B cell (primary cell): ENCODE measurements at regions of chr1 and their contacts with region 1.

Region 1: GRCh38 chr1:87084244-87084836 is 169.9 kb downstream of the HS2ST1 start:
- DNase-seq: peak; percentile 65
- ATAC-seq: no peak
- H3K4me3 ChIP-seq: no peak overlapping the region
- H3K4me3 Mint-ChIP-seq: no peak overlapping the region
- H3K27ac ChIP-seq: no peak overlapping the region
- H3K27ac Mint-ChIP-seq: no peak overlapping the region
- H3K4me1 ChIP-seq: peaks cover 0 to 4% of the 10 kb centered on the region in 2 donors
- H3K4me1 Mint-ChIP-seq: peaks cover 14% of the 10 kb centered on the region
- H3K27me3 ChIP-seq: no peaks in the 10 kb centered on the region
- H3K27me3 Mint-ChIP-seq: no peaks in the 10 kb centered on the region
- CTCF ChIP-seq: peak; percentile 88

Region 2: GRCh38 chr1:86380257-86380861 is 704.0 kb before region 1 on chr1:
- CTCF ChIA-PET with region 1: interaction called, 6 read pairs
- POLR2A ChIA-PET with region 1: no interaction called
- intact Hi-C with region 1: loop called (anchors 2 kb)
- DNase-seq: peak; percentile 68
- ATAC-seq: peak; percentile 63
- H3K4me3 ChIP-seq: no peak overlapping the region
- H3K4me3 Mint-ChIP-seq: no peak overlapping the region
- H3K27ac ChIP-seq: no peak overlapping the region
- H3K27ac Mint-ChIP-seq: no peak overlapping the region
- H3K4me1 ChIP-seq: peaks cover 0 to 4% of the 10 kb centered on the region in 2 donors
- H3K4me1 Mint-ChIP-seq: peaks cover 8% of the 10 kb centered on the region
- H3K27me3 ChIP-seq: no peaks in the 10 kb centered on the region
- H3K27me3 Mint-ChIP-seq: no peaks in the 10 kb centered on the region
- CTCF ChIP-seq: peak; percentile 88

Region 3: GRCh38 chr1:86741947-86742572 is 342.3 kb before region 1 on chr1:
- CTCF ChIA-PET with region 1: no interaction called
- POLR2A ChIA-PET with region 1: no interaction called
- intact Hi-C with region 1: loop called (anchors 5 kb)
- DNase-seq: peak; percentile 50
- ATAC-seq: no peak
- H3K4me3 ChIP-seq: no peak overlapping the region
- H3K4me3 Mint-ChIP-seq: no peak overlapping the region
- H3K27ac ChIP-seq: no peak overlapping the region
- H3K27ac Mint-ChIP-seq: no peak overlapping the region
- H3K4me1 ChIP-seq: peaks cover 7 to 10% of the 10 kb centered on the region in 2 donors
- H3K4me1 Mint-ChIP-seq: no peaks in the 10 kb centered on the region
- H3K27me3 ChIP-seq: no peaks in the 10 kb centered on the region
- H3K27me3 Mint-ChIP-seq: no peaks in the 10 kb centered on the region
- CTCF ChIP-seq: peak; percentile 88

Region 4: GRCh38 chr1:86913896-86914634 is 170.3 kb before region 1 on chr1 and contains the start of gene SELENOF:
- CTCF ChIA-PET with region 1: interaction called, 38 read pairs
- POLR2A ChIA-PET with region 1: no interaction called
- intact Hi-C with region 1: loop called (anchors 5 kb)
- DNase-seq: peak; percentile 100
- ATAC-seq: peak; percentile 87
- H3K4me3 ChIP-seq: peak within 1 kb of the TSS; percentile 91 to 100 (median 94)
- H3K4me3 Mint-ChIP-seq: no peak within 1 kb of the TSS
- H3K27ac ChIP-seq: peak within 1 kb of the TSS; percentile 94 to 97
- H3K27ac Mint-ChIP-seq: no peak within 1 kb of the TSS
- H3K4me1 ChIP-seq: peaks cover 31 to 34% of the 10 kb centered on the region in 2 donors
- H3K4me1 Mint-ChIP-seq: peaks cover 48% of the 10 kb centered on the region
- H3K27me3 ChIP-seq: no peaks in the 10 kb centered on the region
- H3K27me3 Mint-ChIP-seq: no peaks in the 10 kb centered on the region
- CTCF ChIP-seq: no peak
- total RNA-seq, gene SELENOF: 178 and 185 TPM in 2 replicates

Region 5: GRCh38 chr1:87017998-87018672 is 66.2 kb before region 1 on chr1:
- CTCF ChIA-PET with region 1: no interaction called
- POLR2A ChIA-PET with region 1: no interaction called
- intact Hi-C with region 1: no loop called
- DNase-seq: no peak
- ATAC-seq: no peak
- H3K4me3 ChIP-seq: no peak overlapping the region
- H3K4me3 Mint-ChIP-seq: no peak overlapping the region
- H3K27ac ChIP-seq: no peak overlapping the region
- H3K27ac Mint-ChIP-seq: no peak overlapping the region
- H3K4me1 ChIP-seq: no peaks in the 10 kb centered on the region
- H3K4me1 Mint-ChIP-seq: peaks cover 12% of the 10 kb centered on the region
- H3K27me3 ChIP-seq: no peaks in the 10 kb centered on the region
- H3K27me3 Mint-ChIP-seq: no peaks in the 10 kb centered on the region
- CTCF ChIP-seq: no peak

Region 6: DNA sequence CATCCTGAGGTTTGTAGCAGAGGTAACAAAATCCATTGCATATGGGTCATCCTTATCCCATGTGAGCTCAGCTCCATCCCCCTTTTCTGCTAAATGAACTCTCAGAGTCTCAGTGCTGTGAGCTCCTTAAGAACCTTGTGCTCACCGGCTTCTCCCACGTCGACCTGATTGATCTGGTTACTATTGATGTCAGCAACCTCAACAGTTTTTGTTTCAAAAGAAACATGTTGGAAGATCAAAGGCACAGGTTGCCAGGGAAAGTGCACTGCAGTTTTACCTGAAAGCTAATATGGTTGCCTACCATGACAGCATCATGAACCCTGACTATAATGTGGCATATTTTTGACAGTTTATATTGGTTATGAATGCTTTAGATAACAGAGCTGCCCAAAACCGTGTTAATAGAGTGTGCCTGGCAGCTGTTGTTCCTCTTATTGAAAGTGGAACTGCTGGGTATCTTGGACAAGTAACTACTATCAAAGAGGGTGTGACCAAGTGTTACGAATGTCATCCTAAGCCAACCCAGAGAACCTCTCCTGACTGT is 38.5 kb before region 1 on chr1:
- CTCF ChIA-PET with region 1: interaction called, 6 read pairs
- POLR2A ChIA-PET with region 1: no interaction called
- intact Hi-C with region 1: loop called (anchors 5 kb)
- DNase-seq: peak; percentile 48
- ATAC-seq: peak; percentile 82
- H3K4me3 ChIP-seq: peak overlapping the region in 1 of 5 experiments; percentile 17
- H3K4me3 Mint-ChIP-seq: peak overlapping the region; percentile 62
- H3K27ac ChIP-seq: peak overlapping the region; percentile 50 to 65
- H3K27ac Mint-ChIP-seq: peak overlapping the region; percentile 86
- H3K4me1 ChIP-seq: peaks cover 16 to 27% of the 10 kb centered on the region in 2 donors
- H3K4me1 Mint-ChIP-seq: peaks cover 46% of the 10 kb centered on the region
- H3K27me3 ChIP-seq: no peaks in the 10 kb centered on the region
- H3K27me3 Mint-ChIP-seq: no peaks in the 10 kb centered on the region
- CTCF ChIP-seq: no peak

Region 7: GRCh38 chr1:87074001-87074795 is 10.1 kb before region 1 on chr1:
- CTCF ChIA-PET with region 1: interaction called, 14 read pairs
- POLR2A ChIA-PET with region 1: no interaction called
- intact Hi-C with region 1: no loop called
- DNase-seq: no peak
- ATAC-seq: no peak
- H3K4me3 ChIP-seq: no peak overlapping the region
- H3K4me3 Mint-ChIP-seq: no peak overlapping the region
- H3K27ac ChIP-seq: no peak overlapping the region
- H3K27ac Mint-ChIP-seq: no peak overlapping the region
- H3K4me1 ChIP-seq: no peaks in the 10 kb centered on the region
- H3K4me1 Mint-ChIP-seq: no peaks in the 10 kb centered on the region
- H3K27me3 ChIP-seq: no peaks in the 10 kb centered on the region
- H3K27me3 Mint-ChIP-seq: no peaks in the 10 kb centered on the region
- CTCF ChIP-seq: no peak

Region 8: DNA sequence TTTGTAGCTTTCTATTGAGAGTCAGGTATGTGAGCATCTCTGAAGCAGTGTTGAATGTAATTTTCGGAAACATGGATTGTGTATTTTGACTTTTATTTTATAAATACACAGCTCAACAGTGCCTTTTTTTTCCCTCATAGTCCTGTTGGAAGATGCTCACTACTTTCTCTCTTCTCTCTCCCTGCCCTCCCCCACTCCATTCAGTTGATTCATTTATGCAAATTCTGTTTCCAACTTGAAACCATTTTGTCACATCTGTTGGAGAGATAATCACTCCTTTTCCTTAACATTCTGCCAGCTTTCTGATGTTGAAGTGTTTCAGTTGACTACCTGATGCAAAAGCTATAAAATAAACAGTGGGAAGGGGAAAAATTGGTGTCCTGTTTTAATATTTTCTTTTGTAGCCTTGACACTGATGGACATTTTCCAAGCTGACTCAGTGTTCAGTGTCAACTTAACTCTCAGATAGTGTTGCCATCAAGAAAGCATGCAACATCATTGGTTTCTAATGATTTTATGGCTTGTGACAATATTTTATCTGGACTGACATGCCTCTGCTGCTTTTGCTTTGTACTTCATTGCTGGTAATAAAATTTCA is 24.6 kb after region 1 on chr1:
- CTCF ChIA-PET with region 1: no interaction called
- POLR2A ChIA-PET with region 1: no interaction called
- intact Hi-C with region 1: no loop called
- DNase-seq: no peak
- ATAC-seq: no peak
- H3K4me3 ChIP-seq: no peak overlapping the region
- H3K4me3 Mint-ChIP-seq: no peak overlapping the region
- H3K27ac ChIP-seq: no peak overlapping the region
- H3K27ac Mint-ChIP-seq: no peak overlapping the region
- H3K4me1 ChIP-seq: peaks cover 0 to 3% of the 10 kb centered on the region in 2 donors
- H3K4me1 Mint-ChIP-seq: peaks cover 16% of the 10 kb centered on the region
- H3K27me3 ChIP-seq: no peaks in the 10 kb centered on the region
- H3K27me3 Mint-ChIP-seq: no peaks in the 10 kb centered on the region
- CTCF ChIP-seq: no peak

Region 9: DNA sequence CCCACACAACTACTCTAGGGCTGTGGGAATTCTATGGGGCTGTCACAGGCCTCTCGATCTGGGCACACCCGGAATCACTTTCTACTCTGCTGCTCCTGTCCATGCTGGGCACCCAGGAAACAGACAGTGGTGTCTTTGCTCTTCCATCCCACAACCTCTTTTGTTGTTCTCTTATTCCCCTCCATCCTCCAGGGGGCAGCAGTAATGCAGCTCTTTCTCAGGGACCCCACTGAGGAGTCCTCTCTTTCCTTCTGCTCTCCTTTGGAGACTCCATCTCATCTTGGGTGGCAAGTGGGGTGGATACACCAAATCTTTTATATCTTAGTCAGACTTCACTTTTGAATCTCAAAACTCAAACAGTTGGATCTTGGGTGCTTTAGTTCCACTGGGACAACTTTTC is 36.4 kb after region 1 on chr1:
- CTCF ChIA-PET with region 1: no interaction called
- POLR2A ChIA-PET with region 1: no interaction called
- intact Hi-C with region 1: no loop called
- DNase-seq: no peak
- ATAC-seq: no peak
- H3K4me3 ChIP-seq: no peak overlapping the region
- H3K4me3 Mint-ChIP-seq: no peak overlapping the region
- H3K27ac ChIP-seq: no peak overlapping the region
- H3K27ac Mint-ChIP-seq: no peak overlapping the region
- H3K4me1 ChIP-seq: no peaks in the 10 kb centered on the region
- H3K4me1 Mint-ChIP-seq: peaks cover 3% of the 10 kb centered on the region
- H3K27me3 ChIP-seq: no peaks in the 10 kb centered on the region
- H3K27me3 Mint-ChIP-seq: no peaks in the 10 kb centered on the region
- CTCF ChIP-seq: peak; percentile 18